ENCODE measurements at regions of chr1 and their contacts with region 1.

Region 1: DNA sequence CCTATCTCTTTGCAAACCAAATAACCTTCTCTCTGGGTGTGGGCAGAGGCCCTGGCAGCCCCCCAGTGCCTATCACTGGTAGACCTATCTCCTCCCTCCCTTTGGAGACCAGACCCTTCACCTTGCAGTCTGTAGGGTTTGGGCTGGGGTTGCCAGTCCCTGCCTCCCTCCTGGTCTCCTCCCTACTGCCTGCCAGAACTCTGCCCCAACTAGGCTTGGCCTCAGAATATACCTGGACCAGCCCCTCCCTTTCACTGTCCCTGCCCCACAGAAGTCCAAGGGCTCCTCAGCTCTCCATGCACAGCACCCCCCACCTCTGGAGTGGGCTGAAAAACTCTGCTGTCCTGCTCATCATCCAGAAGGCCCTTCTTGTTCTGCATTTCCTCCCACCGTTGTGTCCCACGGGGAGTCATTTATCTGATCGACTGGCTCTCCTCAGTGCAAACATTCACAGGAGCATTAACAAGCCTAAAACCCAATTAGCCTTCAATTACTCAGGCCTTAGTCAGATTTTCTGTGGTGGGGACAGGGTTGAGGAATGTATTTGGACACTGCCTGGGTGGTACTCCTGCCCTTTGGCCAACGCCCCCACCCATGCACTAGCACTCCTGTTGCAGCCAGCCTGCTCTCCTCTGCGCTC is 27.7 kb upstream of the DMBX1 start:
- DNase-seq: no peak
- H3K4me3 ChIP-seq: no peak overlapping the region
- H3K27ac ChIP-seq: no peak overlapping the region
- H3K4me1 ChIP-seq: peaks cover 0 to 2% of the 10 kb centered on the region in 2 donors
- H3K27me3 ChIP-seq: peaks cover 0 to 4% of the 10 kb centered on the region in 2 donors
- CTCF ChIP-seq: no peak
- POLR2A ChIP-seq: no peak

Region 2: DNA sequence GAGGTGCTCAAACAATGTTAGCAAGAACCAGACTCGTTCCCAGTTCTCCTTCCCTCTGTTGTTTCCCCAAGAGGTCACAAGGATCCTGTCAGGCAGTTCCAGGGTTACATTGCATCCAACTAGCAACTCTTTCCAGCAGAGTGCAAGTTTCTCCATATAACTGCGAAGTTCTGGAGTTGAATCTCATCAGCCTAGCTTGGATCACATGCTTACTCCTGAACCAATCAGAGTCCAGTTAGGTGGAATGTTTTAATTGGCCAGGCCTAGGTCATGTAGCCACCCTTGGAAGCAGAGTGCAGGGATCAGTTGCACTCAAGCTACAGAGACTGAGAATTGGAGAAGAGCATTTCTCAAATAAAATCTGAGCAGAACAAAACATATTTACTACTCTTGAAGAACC is 313.6 kb before region 1 on chr1:
- intact Hi-C with region 1: loop called (anchors 5 kb)
- DNase-seq: no peak
- H3K4me3 ChIP-seq: no peak overlapping the region
- H3K27ac ChIP-seq: no peak overlapping the region
- H3K4me1 ChIP-seq: no peaks in the 10 kb centered on the region
- H3K27me3 ChIP-seq: no peaks in the 10 kb centered on the region
- CTCF ChIP-seq: no peak
- POLR2A ChIP-seq: no peak

Region 3: GRCh38 chr1:46476673-46477072 is 14.7 kb after region 1 on chr1:
- intact Hi-C with region 1: no loop called
- DNase-seq: no peak
- H3K4me3 ChIP-seq: no peak overlapping the region
- H3K27ac ChIP-seq: no peak overlapping the region
- H3K4me1 ChIP-seq: no peaks in the 10 kb centered on the region
- H3K27me3 ChIP-seq: peaks cover 0 to 20% of the 10 kb centered on the region in 2 donors
- CTCF ChIP-seq: no peak
- POLR2A ChIP-seq: no peak

Region 4: GRCh38 chr1:46587069-46587468 is 125.1 kb after region 1 on chr1:
- intact Hi-C with region 1: no loop called
- DNase-seq: no peak
- H3K4me3 ChIP-seq: no peak overlapping the region
- H3K27ac ChIP-seq: no peak overlapping the region
- H3K4me1 ChIP-seq: no peaks in the 10 kb centered on the region
- H3K27me3 ChIP-seq: no peaks in the 10 kb centered on the region
- CTCF ChIP-seq: no peak
- POLR2A ChIP-seq: no peak

Region 5: DNA sequence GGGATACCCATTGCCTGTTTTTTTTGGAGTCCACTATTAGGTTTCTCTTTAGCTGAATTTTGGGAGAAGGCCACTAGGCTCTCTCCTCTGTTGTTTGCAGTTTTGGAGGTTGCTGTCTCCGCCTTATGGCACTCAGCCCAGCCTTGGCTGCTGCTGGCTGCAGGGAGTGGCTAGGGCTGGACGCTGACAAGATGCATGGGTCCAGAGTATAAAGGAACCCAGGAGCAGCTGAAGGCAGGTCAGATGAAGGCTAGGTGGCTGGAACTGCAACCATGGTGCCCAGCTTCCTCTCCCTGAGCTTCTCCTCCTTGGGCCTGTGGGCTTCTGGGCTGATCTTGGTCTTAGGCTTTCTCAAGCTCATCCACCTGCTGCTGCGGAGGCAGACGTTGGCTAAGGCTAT is 336.9 kb after region 1 on chr1 and contains the start of gene CYP4B1:
- intact Hi-C with region 1: no loop called
- DNase-seq: peak; percentile 41 to 74
- H3K4me3 ChIP-seq: peak within 1 kb of the TSS; percentile 14 to 58 (median 53)
- H3K27ac ChIP-seq: peak within 1 kb of the TSS in 1 of 2 donors; percentile 61
- H3K4me1 ChIP-seq: no peaks in the 10 kb centered on the region
- H3K27me3 ChIP-seq: no peaks in the 10 kb centered on the region
- CTCF ChIP-seq: no peak
- POLR2A ChIP-seq: no peak
- total RNA-seq, gene CYP4B1: 58.4 to 882 (median 74.1) TPM

Measured in breast epithelium (tissue), 4 donors.